ENCODE measurements at regions of chr10 and their contacts with region 1.

Region 1: DNA sequence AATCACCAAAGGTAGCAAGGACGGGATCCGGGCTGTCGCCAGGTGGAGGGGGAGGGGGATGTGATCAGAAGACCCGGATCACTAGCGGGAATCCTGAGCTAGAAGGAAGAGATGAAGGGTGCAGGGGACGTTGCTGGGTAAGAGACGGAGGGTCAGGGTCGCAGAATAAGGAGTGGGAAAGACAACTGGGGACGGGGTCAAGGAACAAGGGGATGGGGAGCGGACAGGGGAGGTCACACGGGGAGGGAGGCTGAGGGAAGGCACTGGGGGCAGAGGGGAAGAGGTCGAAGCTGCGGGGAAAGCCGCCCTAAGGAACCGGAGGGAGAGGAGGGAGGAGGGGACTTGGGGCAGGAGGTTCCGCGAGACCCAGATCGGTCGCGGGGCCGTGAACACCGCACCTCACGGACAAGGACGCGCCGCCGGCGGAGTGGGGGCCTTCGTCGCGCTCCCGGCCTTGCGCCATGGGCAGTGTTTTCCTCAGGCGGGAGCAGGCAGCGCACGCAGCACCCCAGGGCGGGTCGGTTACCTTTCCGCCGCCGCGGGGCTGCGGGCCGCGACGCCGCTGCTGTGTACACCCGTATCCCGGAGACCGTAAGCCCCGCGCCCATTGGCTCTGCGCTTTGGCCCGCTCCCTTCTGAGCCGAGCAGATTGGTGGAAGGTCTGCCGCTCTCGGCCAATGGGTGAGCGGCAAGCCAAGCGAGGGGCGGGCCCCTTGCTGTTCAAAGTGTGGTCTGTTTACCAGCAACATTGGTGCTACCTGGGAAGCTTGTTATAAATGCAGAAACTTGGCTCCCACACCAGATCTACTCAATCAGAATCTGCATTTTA is at the start of gene CFAP43:
- DNase-seq: peak; percentile 99
- H3K4me3 ChIP-seq: peak within 1 kb of the TSS; percentile 78 to 95
- H3K27ac ChIP-seq: peak within 1 kb of the TSS; percentile 64 to 73
- H3K4me1 ChIP-seq: peaks cover 6% of the 10 kb centered on the region
- H3K27me3 ChIP-seq: no peaks in the 10 kb centered on the region
- CTCF ChIP-seq: no peak
- POLR2A ChIP-seq: no peak
- total RNA-seq, gene CFAP43: 37.8 to 72.8 TPM

Region 2: DNA sequence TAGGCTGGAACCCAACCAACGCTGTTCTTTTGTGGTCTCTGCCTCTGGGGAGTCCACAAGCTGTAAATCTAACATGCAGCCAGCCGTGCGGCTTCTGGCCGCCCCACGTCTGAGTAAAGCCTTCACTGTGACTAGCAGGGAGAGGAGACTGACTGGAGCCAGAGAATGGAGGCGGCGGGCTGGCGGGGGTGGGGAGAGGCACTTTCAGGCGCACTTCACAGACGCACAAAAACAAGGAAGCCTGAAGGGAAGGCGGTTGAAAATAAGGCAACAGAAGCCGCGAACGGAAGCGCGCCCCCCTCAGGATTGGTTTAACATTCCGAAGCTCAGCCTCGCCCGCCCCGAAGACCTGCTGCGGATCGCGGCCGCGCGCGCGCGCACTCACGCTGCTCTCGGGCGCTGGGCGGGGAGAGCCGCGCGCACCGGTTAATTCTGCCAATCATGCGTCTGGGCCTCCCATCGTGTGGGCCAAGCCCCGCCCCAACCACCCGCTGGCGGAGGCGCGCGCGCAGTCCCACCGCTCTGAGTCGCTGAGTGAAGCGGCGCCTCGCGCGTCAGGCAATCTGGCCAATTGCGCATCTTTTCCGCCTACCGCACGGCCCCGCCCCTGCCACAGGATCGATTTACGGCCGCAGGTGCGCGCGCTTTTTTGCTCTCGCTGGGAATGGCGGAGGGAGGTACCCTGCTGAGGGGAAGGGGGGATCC is 110.3 kb before region 1 on chr10 and contains the start of gene SFR1:
- intact Hi-C with region 1: loop called (anchors 5 kb)
- DNase-seq: peak; percentile 99
- H3K4me3 ChIP-seq: peak within 1 kb of the TSS; percentile 80 to 87
- H3K27ac ChIP-seq: peak within 1 kb of the TSS; percentile 97 to 100
- H3K4me1 ChIP-seq: peaks cover 15% of the 10 kb centered on the region
- H3K27me3 ChIP-seq: no peaks in the 10 kb centered on the region
- CTCF ChIP-seq: peak; percentile 40 to 60 (median 48)
- POLR2A ChIP-seq: peak; percentile 59
- total RNA-seq, gene SFR1: 14.7 to 42.8 TPM

Measured in testis (tissue), 5 donors.